Endothelial cell of umbilical vein (primary cell): ENCODE measurements at regions of chr4 and their contacts with region 1.

Region 1: GRCh38 chr4:128191115-128191781 is 96.4 kb downstream of the PGRMC2 start:
- DNase-seq: peak; percentile 76
- H3K4me3 ChIP-seq: no peak overlapping the region
- H3K27ac ChIP-seq: no peak overlapping the region
- H3K4me1 ChIP-seq: no peaks in the 10 kb centered on the region
- H3K27me3 ChIP-seq: no peaks in the 10 kb centered on the region
- CTCF ChIP-seq: peak; percentile 71 to 75
- POLR2A ChIP-seq: no peak

Region 2: GRCh38 chr4:128068935-128069334 is 122.3 kb before region 1 on chr4:
- CTCF ChIA-PET with region 1: interaction called, 18 read pairs
- POLR2A ChIA-PET with region 1: interaction called, 5 read pairs
- dilution Hi-C with region 1: no loop called
- intact Hi-C with region 1: loop called (anchors 5 kb)
- DNase-seq: peak; percentile 40
- H3K4me3 ChIP-seq: no peak overlapping the region
- H3K27ac ChIP-seq: no peak overlapping the region
- H3K4me1 ChIP-seq: no peaks in the 10 kb centered on the region
- H3K27me3 ChIP-seq: no peaks in the 10 kb centered on the region
- CTCF ChIP-seq: peak; percentile 45 to 59
- POLR2A ChIP-seq: no peak

Region 3: DNA sequence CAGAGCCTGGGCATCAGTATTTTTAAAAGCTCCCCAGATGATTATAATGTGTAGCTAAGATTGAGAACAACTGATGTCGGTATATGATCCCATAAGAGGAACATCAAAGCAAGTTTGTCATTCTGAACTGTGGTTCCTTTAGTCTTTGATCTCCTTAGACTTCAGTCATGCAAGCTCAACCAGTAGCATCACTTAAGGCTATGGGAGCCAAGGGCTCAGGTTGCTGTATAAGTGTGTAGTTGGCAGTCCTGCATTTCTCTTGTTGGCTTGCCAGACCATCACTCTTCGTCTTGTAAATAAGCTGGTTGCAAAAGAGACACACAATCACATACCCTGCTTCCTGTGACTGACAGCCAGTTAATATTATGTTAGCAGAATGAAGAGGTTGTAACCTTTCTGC is 13.7 kb after region 1 on chr4:
- CTCF ChIA-PET with region 1: interaction called, 10 read pairs
- POLR2A ChIA-PET with region 1: no interaction called
- dilution Hi-C with region 1: no loop called
- intact Hi-C with region 1: no loop called
- DNase-seq: no peak
- H3K4me3 ChIP-seq: no peak overlapping the region
- H3K27ac ChIP-seq: no peak overlapping the region
- H3K4me1 ChIP-seq: no peaks in the 10 kb centered on the region
- H3K27me3 ChIP-seq: no peaks in the 10 kb centered on the region
- CTCF ChIP-seq: no peak
- POLR2A ChIP-seq: no peak

Region 4: GRCh38 chr4:128220286-128221235 is 29.3 kb after region 1 on chr4:
- CTCF ChIA-PET with region 1: interaction called, 39 read pairs
- POLR2A ChIA-PET with region 1: no interaction called
- dilution Hi-C with region 1: no loop called
- intact Hi-C with region 1: loop called (anchors 2 kb)
- DNase-seq: peak; percentile 70
- H3K4me3 ChIP-seq: no peak overlapping the region
- H3K27ac ChIP-seq: peak overlapping the region; percentile 28
- H3K4me1 ChIP-seq: no peaks in the 10 kb centered on the region
- H3K27me3 ChIP-seq: no peaks in the 10 kb centered on the region
- CTCF ChIP-seq: peak; percentile 16 to 20
- POLR2A ChIP-seq: no peak

Region 5: GRCh38 chr4:128366212-128366611 is 175.0 kb after region 1 on chr4:
- CTCF ChIA-PET with region 1: no interaction called
- POLR2A ChIA-PET with region 1: no interaction called
- dilution Hi-C with region 1: no loop called
- intact Hi-C with region 1: no loop called
- DNase-seq: no peak
- H3K4me3 ChIP-seq: no peak overlapping the region
- H3K27ac ChIP-seq: no peak overlapping the region
- H3K4me1 ChIP-seq: no peaks in the 10 kb centered on the region
- H3K27me3 ChIP-seq: no peaks in the 10 kb centered on the region
- CTCF ChIP-seq: no peak
- POLR2A ChIP-seq: no peak

Region 6: GRCh38 chr4:128379860-128380259 is 188.6 kb after region 1 on chr4:
- CTCF ChIA-PET with region 1: interaction called, 3 read pairs
- POLR2A ChIA-PET with region 1: no interaction called
- dilution Hi-C with region 1: no loop called
- intact Hi-C with region 1: loop called (anchors 5 kb)
- DNase-seq: peak; percentile 32
- H3K4me3 ChIP-seq: no peak overlapping the region
- H3K27ac ChIP-seq: no peak overlapping the region
- H3K4me1 ChIP-seq: no peaks in the 10 kb centered on the region
- H3K27me3 ChIP-seq: no peaks in the 10 kb centered on the region
- CTCF ChIP-seq: peak; percentile 55 to 71
- POLR2A ChIP-seq: no peak

Region 7: GRCh38 chr4:129344058-129344457 is 1152.8 kb after region 1 on chr4:
- CTCF ChIA-PET with region 1: no interaction called
- POLR2A ChIA-PET with region 1: no interaction called
- dilution Hi-C with region 1: no loop called
- intact Hi-C with region 1: loop called (anchors 10 kb)
- DNase-seq: peak; percentile 50
- H3K4me3 ChIP-seq: no peak overlapping the region
- H3K27ac ChIP-seq: no peak overlapping the region
- H3K4me1 ChIP-seq: no peaks in the 10 kb centered on the region
- H3K27me3 ChIP-seq: no peaks in the 10 kb centered on the region
- CTCF ChIP-seq: peak; percentile 56 to 60
- POLR2A ChIP-seq: no peak